SK-N-SH (cell line): ENCODE measurements at regions of chr6 and their contacts with region 1.

Region 1: GRCh38 chr6:34459899-34460593 is 5.8 kb upstream of the PACSIN1 start:
- DNase-seq: peak; percentile 63
- H3K4me3 ChIP-seq: no peak overlapping the region
- H3K27ac ChIP-seq: no peak overlapping the region
- H3K4me1 ChIP-seq: peaks cover 0 to 3% of the 10 kb centered on the region in 2 experiments; a peak in 1 of 4 replicates
- H3K27me3 ChIP-seq: no peaks in the 10 kb centered on the region
- CTCF ChIP-seq: peak; percentile 55
- EP300 ChIP-seq: no peak
- RAD21 ChIP-seq: peak; percentile 87

Region 2: DNA sequence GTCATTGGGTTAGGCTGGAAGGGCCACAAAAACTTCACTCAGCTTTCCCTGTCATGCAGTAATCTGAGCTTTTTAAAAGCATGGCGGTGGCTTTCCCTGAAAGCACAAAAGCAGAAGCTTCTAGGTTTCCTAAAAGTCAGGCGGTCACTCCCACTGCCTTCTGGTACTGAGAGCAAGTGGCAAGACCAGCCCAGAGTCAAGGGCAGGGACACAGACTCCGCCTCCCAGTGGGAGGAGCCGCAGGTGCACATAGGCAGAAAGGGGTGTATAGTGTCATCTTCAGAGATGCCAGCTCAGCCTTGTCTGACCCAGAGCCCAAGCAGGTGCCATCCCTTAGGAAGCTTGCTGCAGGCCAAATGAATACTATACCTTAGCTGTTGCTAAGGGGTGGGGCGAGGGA is 12.1 kb before region 1 on chr6:
- CTCF ChIA-PET with region 1: interaction called, 28 read pairs
- POLR2A ChIA-PET with region 1: no interaction called
- DNase-seq: no peak
- H3K4me3 ChIP-seq: no peak overlapping the region
- H3K27ac ChIP-seq: no peak overlapping the region
- H3K4me1 ChIP-seq: peaks cover 0 to 3% of the 10 kb centered on the region in 2 experiments; a peak in 1 of 4 replicates
- H3K27me3 ChIP-seq: no peaks in the 10 kb centered on the region
- CTCF ChIP-seq: no peak
- EP300 ChIP-seq: no peak
- RAD21 ChIP-seq: no peak

Region 3: DNA sequence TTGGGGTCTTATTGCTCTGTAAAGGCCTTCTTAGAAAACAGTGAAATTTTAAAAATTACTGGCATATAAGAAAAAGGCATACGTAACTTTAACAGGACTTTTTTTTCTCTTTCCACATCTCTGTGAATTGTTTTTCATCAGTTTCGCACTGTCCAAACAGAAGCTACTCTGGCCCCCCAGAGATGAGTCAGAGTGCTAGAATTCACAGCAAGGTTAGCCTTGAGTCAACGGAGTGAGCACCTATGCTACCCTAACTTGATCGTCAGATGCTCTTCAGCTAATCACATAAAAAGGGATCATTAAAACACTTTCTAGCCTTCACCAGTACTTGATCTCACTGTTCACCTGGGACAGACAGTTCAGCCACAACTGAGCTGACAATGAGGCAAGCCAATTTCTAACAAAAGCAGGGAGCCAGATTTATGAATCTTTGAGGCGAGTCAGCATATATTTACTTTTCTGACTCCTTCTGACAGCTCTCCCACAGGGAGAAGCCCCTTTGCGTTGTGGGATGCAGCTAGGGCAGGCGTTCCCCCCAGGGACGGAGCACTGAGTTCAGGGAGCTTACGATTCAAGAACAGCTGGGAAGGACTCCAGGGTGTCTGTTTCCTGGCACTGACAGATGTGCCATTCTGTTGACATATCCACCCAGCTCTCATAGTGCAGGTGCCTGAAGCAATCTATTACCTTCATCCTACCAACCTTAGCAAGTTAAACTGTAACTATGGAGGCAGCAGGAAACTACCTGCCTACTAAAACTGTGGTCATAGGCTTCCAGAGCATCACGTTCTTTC is 142.5 kb after region 1 on chr6:
- CTCF ChIA-PET with region 1: interaction called, 74 read pairs
- POLR2A ChIA-PET with region 1: no interaction called
- DNase-seq: no peak
- H3K4me3 ChIP-seq: no peak overlapping the region
- H3K27ac ChIP-seq: no peak overlapping the region; a peak in 1 of 4 replicates
- H3K4me1 ChIP-seq: peaks cover 6 to 10% of the 10 kb centered on the region in 2 experiments; a peak in 3 of 4 replicates
- H3K27me3 ChIP-seq: no peaks in the 10 kb centered on the region
- CTCF ChIP-seq: no peak
- EP300 ChIP-seq: no peak
- RAD21 ChIP-seq: no peak